ENCODE measurements at regions of chr2 and their contacts with region 1.

Region 1: GRCh38 chr2:130797493-130798435 is 39.0 kb upstream of the ARHGEF4 start:
- DNase-seq: peak; percentile 78 to 96 (median 91)
- ATAC-seq: peak; percentile 88 to 90
- H3K4me3 Mint-ChIP-seq: peak overlapping the region; percentile 66 to 84 (median 71)
- H3K27ac Mint-ChIP-seq: peak overlapping the region in 7 of 10 donors; percentile 61 to 81 (median 69)
- H3K4me1 Mint-ChIP-seq: peaks cover 0 to 24% (median 7%) of the 10 kb centered on the region in 4 donors
- H3K27me3 Mint-ChIP-seq: peaks cover 0 to 4% (median 0%) of the 10 kb centered on the region in 5 donors

Region 2: DNA sequence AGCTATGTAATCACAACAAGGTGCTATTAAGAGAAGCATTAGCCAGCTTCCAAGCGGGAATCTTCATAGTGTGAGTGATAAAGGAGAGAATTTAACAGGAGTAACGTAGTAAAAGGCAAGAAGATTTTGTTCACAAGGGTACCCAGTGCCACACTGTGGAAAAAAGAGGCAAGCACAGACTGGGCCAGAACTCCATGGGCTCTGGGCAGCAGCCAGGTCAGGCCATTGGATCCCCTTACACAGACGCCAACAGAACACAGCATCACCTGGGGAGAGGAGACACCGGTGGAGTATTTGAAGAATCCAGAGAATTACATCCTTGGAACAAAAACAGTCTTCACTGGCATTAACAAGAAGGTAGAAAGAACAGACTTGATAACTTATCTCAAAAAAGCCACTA is 21.2 kb before region 1 on chr2:
- POLR2A ChIA-PET with region 1: no interaction called
- DNase-seq: no peak
- ATAC-seq: no peak
- H3K4me3 Mint-ChIP-seq: no peak overlapping the region
- H3K27ac Mint-ChIP-seq: no peak overlapping the region
- H3K4me1 Mint-ChIP-seq: no peaks in the 10 kb centered on the region
- H3K27me3 Mint-ChIP-seq: peaks cover 3 to 47% (median 26%) of the 10 kb centered on the region in 5 donors

Region 3: DNA sequence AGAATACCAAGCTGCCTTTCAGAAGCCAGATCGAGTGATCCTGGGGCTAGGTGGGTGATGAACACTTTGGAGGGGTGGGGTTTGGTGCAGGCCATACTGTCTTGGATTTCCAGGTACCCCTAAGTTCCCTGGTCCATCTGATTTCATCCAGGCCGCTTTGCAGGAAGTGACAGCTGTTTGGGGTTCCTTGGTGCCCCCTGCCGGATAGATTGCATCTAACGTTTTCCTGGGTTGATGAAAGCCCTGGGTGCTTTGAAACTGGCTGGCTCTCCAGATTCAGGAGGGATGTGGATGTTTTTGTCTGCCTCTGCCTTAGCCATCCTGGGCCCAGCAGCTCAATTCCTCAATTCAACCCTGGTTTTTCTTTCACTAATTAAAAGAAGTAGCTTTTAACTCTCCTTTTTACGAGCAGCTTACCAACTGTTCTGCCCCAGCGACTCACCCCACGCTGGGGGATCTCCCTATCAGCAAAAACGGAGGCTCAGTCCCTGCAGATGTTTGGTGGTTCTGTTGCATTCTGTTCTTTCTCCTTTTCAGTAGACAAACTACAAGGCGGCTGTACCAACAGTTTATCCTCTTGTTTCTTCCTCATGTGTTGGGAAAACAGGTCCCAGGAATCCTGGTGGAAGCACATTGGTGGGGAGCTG is 76.1 kb after region 1 on chr2:
- POLR2A ChIA-PET with region 1: interaction called, 14 read pairs
- DNase-seq: peak; percentile 26 to 86 (median 54)
- ATAC-seq: peak; percentile 50 to 80
- H3K4me3 Mint-ChIP-seq: no peak overlapping the region
- H3K27ac Mint-ChIP-seq: peak overlapping the region in 1 of 10 donors; percentile 14
- H3K4me1 Mint-ChIP-seq: peaks cover 0 to 2% (median 0%) of the 10 kb centered on the region in 4 donors
- H3K27me3 Mint-ChIP-seq: peaks cover 3 to 34% (median 8%) of the 10 kb centered on the region in 5 donors

Measured in naive thymus-derived CD8-positive, alpha-beta T cell (primary cell).